ENCODE measurements at regions of chr1 and their contacts with region 1.

Region 1: GRCh38 chr1:61453111-61453961 is 271.6 kb downstream of the TM2D1 start:
- DNase-seq: peak; percentile 76 to 97
- H3K4me3 ChIP-seq: peak overlapping the region in 1 of 2 donors; percentile 31
- H3K27ac ChIP-seq: peak overlapping the region; percentile 83 to 92
- H3K4me1 ChIP-seq: peaks cover 20 to 54% of the 10 kb centered on the region in 2 donors
- H3K27me3 ChIP-seq: no peaks in the 10 kb centered on the region
- CTCF ChIP-seq: peak; percentile 67 to 80 (median 68)

Region 2: DNA sequence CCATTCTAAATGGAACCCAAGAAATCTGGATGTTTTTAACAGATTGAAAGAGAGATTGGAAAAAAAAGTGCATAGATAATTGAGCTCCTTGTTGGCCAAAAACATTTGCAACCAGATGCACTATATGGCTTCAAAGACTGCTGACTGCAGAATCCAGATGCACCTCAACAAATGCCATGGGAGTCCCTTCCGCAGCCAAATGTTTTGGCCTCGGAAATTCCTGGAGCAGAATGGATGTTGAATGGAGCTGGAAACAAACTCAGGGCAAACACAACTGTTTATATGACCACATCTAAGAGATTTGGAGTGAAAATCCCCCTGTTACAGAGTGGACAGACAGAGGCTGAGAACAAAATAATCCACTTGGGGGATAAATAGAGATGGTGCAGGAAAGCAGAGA is 656.0 kb before region 1 on chr1:
- intact Hi-C with region 1: no loop called
- DNase-seq: no peak
- H3K4me3 ChIP-seq: no peak overlapping the region
- H3K27ac ChIP-seq: no peak overlapping the region
- H3K4me1 ChIP-seq: no peaks in the 10 kb centered on the region
- H3K27me3 ChIP-seq: no peaks in the 10 kb centered on the region
- CTCF ChIP-seq: no peak

Region 3: GRCh38 chr1:61049850-61050540 is 403.3 kb before region 1 on chr1:
- intact Hi-C with region 1: loop called (anchors 1 kb)
- DNase-seq: peak; percentile 66 to 97
- H3K4me3 ChIP-seq: peak overlapping the region; percentile 72 to 97
- H3K27ac ChIP-seq: peak overlapping the region; percentile 97 to 98
- H3K4me1 ChIP-seq: peaks cover 6 to 21% of the 10 kb centered on the region in 2 donors
- H3K27me3 ChIP-seq: no peaks in the 10 kb centered on the region
- CTCF ChIP-seq: peak; percentile 90 to 98 (median 97)

Region 4: DNA sequence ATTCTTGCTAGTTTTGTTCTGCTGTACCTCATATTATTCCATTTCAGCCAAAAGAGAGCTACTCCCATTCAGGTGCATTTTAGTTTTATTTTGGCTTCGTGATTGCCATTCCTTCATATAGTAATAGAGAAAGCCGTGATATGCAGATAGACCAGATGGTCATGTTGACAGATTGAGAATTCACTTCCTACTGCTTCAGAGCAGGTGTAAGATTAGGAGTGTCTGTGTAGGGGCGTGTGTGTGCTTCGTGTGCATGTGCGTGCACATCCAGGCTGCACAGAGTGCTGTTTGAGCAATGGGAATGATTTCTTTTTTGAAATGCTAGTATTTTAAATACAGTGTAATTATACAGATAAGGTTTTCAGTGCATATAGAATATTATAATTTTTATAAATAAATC is 360.7 kb before region 1 on chr1:
- intact Hi-C with region 1: loop called (anchors 2 kb)
- DNase-seq: no peak
- H3K4me3 ChIP-seq: peak overlapping the region; percentile 7 to 95
- H3K27ac ChIP-seq: peak overlapping the region; percentile 95 to 98
- H3K4me1 ChIP-seq: peaks cover 0 to 20% of the 10 kb centered on the region in 2 donors
- H3K27me3 ChIP-seq: no peaks in the 10 kb centered on the region
- CTCF ChIP-seq: no peak

Region 5: GRCh38 chr1:61287734-61288133 is 165.6 kb before region 1 on chr1:
- intact Hi-C with region 1: loop called (anchors 5 kb)
- DNase-seq: no peak
- H3K4me3 ChIP-seq: no peak overlapping the region
- H3K27ac ChIP-seq: peak overlapping the region; percentile 69 to 76
- H3K4me1 ChIP-seq: peaks cover 4 to 54% of the 10 kb centered on the region in 2 donors
- H3K27me3 ChIP-seq: no peaks in the 10 kb centered on the region
- CTCF ChIP-seq: no peak

Region 6: GRCh38 chr1:61641578-61642336 is 188.4 kb after region 1 on chr1:
- intact Hi-C with region 1: loop called (anchors 2 kb)
- DNase-seq: peak; percentile 47 to 92
- H3K4me3 ChIP-seq: peak overlapping the region; percentile 14 to 62
- H3K27ac ChIP-seq: peak overlapping the region; percentile 91 to 94
- H3K4me1 ChIP-seq: peaks cover 29 to 44% of the 10 kb centered on the region in 2 donors
- H3K27me3 ChIP-seq: no peaks in the 10 kb centered on the region
- CTCF ChIP-seq: peak; percentile 73 to 92 (median 77)